ENCODE measurements at regions of chr2 and their contacts with region 1.

Region 1: GRCh38 chr2:172234716-172235691 is 132.3 kb upstream of the DLX2 start:
- DNase-seq: no peak
- H3K4me3 ChIP-seq: no peak overlapping the region
- H3K27ac ChIP-seq: no peak overlapping the region
- H3K4me1 ChIP-seq: peaks cover 30% of the 10 kb centered on the region
- H3K27me3 ChIP-seq: no peaks in the 10 kb centered on the region
- CTCF ChIP-seq: no peak

Region 2: GRCh38 chr2:172246649-172247048 is 11.6 kb after region 1 on chr2:
- CTCF ChIA-PET with region 1: interaction called, 4 read pairs
- POLR2A ChIA-PET with region 1: interaction called, 4 read pairs
- intact Hi-C with region 1: loop called (anchors 1 kb)
- DNase-seq: peak in 1 of 2 experiments; percentile 46
- H3K4me3 ChIP-seq: no peak overlapping the region
- H3K27ac ChIP-seq: peak overlapping the region; percentile 70
- H3K4me1 ChIP-seq: peaks cover 62% of the 10 kb centered on the region
- H3K27me3 ChIP-seq: no peaks in the 10 kb centered on the region
- CTCF ChIP-seq: no peak

Region 3: GRCh38 chr2:172339371-172340010 is 104.5 kb after region 1 on chr2:
- CTCF ChIA-PET with region 1: no interaction called
- POLR2A ChIA-PET with region 1: no interaction called
- intact Hi-C with region 1: loop called (anchors 5 kb)
- DNase-seq: no peak
- H3K4me3 ChIP-seq: no peak overlapping the region
- H3K27ac ChIP-seq: no peak overlapping the region
- H3K4me1 ChIP-seq: peaks cover 8% of the 10 kb centered on the region
- H3K27me3 ChIP-seq: no peaks in the 10 kb centered on the region
- CTCF ChIP-seq: no peak

Region 4: GRCh38 chr2:172442072-172442895 is 207.3 kb after region 1 on chr2:
- CTCF ChIA-PET with region 1: no interaction called
- POLR2A ChIA-PET with region 1: interaction called, 10 read pairs
- intact Hi-C with region 1: loop called (anchors 1 kb)
- DNase-seq: peak; percentile 100
- H3K4me3 ChIP-seq: peak overlapping the region; percentile 5; the same call in 1 of the 2 replicates
- H3K27ac ChIP-seq: peak overlapping the region; percentile 81
- H3K4me1 ChIP-seq: peaks cover 80% of the 10 kb centered on the region
- H3K27me3 ChIP-seq: no peaks in the 10 kb centered on the region
- CTCF ChIP-seq: no peak

Region 5: DNA sequence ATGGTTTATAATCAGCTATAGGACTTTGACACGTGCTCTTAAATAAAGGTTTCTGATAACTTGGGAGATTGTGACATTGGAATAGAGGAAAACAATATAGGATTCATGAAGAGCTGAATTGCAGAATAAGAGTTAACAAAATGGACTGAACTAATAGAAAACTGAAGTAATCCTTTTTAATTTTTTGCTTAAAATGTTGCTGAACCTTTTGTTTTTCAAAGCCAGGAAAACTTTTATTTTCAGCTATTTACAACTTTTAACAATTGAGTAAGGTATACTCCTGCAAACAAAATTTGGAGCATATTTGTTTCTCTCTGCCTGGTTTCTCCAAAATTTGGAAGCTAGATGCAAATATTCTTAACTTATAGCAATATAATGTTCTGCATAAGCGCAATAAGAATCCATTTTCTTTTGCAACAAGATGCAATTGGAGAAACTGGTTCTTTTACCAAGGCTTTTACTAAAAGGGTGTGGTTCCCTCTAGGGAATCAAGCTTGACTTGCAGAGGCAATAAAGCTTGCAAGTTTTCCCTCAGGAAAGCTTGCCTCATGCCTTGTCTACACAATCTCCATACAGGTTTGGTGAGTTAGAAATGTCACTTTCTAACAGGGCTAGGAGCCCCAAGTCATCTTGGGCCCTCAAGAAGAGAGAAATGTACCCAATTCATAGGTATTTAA is 310.5 kb after region 1 on chr2:
- CTCF ChIA-PET with region 1: no interaction called
- POLR2A ChIA-PET with region 1: interaction called, 18 read pairs
- intact Hi-C with region 1: no loop called
- DNase-seq: peak; percentile 19 to 89
- H3K4me3 ChIP-seq: no peak overlapping the region
- H3K27ac ChIP-seq: no peak overlapping the region
- H3K4me1 ChIP-seq: peaks cover 18% of the 10 kb centered on the region
- H3K27me3 ChIP-seq: no peaks in the 10 kb centered on the region
- CTCF ChIP-seq: peak; percentile 50

Region 6: DNA sequence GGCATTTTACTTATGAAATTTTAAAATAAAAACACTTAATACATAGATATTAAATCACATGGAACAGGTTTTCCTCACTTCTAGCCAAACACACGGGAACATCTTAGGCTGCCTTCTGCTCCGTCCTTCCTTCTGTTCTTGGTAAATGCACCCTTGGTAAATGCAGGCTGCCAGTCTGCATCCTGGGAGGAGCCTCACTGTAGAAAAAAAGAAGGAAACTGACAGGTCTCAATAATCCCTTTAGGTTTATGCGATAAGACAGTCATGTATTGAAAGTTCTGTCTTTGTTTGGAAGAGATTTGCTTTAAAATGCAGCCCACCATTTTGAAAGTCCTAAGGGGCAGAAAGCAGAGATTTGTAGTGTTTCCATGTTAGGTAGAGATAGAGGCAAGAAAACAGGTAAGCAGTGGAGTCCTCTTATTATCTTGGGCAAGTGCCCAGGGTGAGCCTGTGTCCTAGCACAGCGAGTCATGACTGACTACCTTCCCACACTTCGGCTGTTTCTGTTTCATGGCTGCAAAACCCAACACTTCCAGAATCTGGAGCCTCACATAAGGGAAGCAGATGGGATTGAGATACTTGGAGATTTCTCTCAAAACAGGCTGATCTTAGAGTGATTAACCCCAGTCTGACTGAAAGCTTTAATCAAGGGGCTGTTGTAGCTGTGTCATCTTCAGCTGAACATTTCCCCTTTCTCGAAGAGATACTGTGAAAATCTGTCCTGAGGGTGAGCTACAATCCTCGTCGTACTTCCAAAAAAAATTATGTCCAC is 709.2 kb after region 1 on chr2:
- CTCF ChIA-PET with region 1: no interaction called
- POLR2A ChIA-PET with region 1: no interaction called
- intact Hi-C with region 1: no loop called
- DNase-seq: no peak
- H3K4me3 ChIP-seq: no peak overlapping the region
- H3K27ac ChIP-seq: no peak overlapping the region
- H3K4me1 ChIP-seq: no peaks in the 10 kb centered on the region
- H3K27me3 ChIP-seq: no peaks in the 10 kb centered on the region
- CTCF ChIP-seq: no peak